ENCODE measurements at regions of chrX and their contacts with region 1.

Region 1: DNA sequence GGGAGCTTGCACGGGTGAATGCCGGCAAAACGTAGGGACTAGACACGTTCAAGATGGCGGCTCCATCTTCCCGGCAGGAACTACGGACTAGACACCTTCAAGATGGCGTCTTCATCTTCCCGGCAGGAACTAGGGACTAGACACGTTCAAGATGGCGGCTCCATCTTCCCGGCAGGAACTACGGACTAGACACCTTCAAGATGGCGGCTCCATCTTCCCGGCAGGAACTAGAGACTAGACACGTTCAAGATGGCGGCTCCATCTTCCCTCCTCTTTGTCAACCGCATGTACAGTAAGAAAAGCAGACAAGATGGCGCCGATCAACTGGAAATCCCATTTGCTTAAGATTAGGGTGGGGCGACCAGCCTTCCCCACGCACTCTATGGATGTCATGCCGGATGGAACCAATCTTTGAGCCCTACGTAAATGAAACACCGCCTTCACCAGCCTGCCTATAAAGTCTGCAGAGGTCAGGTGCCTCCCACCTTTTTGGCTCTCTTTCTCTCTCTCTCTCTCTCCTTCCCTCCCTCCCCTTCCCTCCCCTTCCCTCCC is 222.4 kb downstream of the CRLF2 start:
- DNase-seq: peak in 1 of 2 donors; percentile 81
- ATAC-seq: peak; percentile 74 to 91
- H3K4me3 ChIP-seq: peak overlapping the region in 3 of 4 donors; percentile 30 to 53 (median 35)
- H3K27ac ChIP-seq: peak overlapping the region in 3 of 4 donors; percentile 31 to 72 (median 68)
- H3K4me1 ChIP-seq: no peaks in the 10 kb centered on the region
- H3K27me3 ChIP-seq: no peaks in the 10 kb centered on the region
- CTCF ChIP-seq: no peak
- POLR2A ChIP-seq: no peak

Region 2: DNA sequence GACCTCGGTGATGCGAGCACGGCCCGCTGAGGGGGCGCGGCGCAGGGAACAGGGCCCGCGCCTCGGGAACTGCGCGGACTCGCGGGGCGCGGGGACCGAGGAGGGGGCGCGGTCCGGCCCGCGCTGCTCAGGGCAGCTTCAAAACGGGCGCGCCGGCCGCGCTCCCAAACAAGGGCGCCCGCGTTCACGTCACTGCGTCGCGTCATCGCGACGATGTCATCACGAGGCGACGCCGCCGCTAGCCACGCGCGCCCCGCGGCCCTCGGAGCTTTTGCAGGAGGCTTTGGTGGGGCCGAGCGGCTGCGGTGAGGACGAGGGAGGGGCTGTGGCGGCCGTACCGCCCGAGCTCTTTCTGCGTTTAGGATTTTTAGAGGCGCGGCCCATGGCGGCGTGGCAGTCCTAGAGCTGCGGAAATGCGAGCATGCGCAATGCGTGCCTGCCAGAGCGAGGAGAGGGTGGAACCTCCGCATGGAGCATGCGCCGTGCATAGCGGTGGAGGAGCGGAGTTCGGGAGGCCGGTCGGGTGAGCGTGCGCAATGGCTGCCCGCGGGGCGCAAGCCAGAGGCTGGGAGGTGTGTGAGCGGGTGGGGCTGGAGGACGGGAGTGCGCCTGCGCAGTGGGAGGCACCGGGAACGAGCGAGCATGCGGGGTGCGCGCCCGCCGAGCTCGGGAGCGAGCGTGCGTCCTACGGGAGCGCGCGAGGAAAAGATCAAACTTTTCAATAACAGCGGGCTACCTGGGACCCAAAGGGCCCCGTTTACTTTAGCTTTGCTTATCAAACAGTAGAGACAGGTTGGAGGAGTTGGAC is 603.1 kb before region 1 on chrX and contains the start of gene PPP2R3B:
- in situ Hi-C with region 1: no loop called
- intact Hi-C with region 1: loop called (anchors 10 kb)
- DNase-seq: peak; percentile 99
- ATAC-seq: peak; percentile 98 to 99
- H3K4me3 ChIP-seq: peak within 1 kb of the TSS; percentile 79 to 98 (median 85)
- H3K27ac ChIP-seq: peak within 1 kb of the TSS; percentile 96 to 99 (median 98)
- H3K4me1 ChIP-seq: peaks cover 7% of the 10 kb centered on the region in 2 donors
- H3K27me3 ChIP-seq: no peaks in the 10 kb centered on the region
- CTCF ChIP-seq: peak in 2 of 5 experiments; percentile 32 to 41
- POLR2A ChIP-seq: peak; percentile 46 to 55
- total RNA-seq, gene PPP2R3B: 53.8 to 103 (median 69.4) TPM

Region 3: DNA sequence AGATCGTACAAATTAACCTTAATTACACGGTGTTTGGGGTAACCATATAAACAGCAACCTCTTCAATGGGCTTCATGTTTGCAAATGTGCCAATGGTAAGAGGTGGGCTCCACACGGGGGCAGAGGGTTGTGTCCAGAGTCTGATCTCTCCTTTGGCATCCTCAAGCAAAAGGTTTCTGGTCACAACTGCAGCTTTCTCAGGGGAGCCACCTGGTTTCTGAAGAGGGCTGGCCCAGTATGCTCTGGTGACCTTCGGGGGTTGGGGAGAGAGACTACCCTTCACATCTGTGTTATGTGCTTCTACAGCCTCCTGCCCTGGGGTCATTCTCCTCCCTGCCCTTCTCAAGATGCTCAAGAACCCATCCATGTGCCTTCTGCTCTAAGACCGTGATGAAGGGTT is 37.2 kb before region 1 on chrX:
- in situ Hi-C with region 1: no loop called
- intact Hi-C with region 1: no loop called
- DNase-seq: no peak
- ATAC-seq: no peak
- H3K4me3 ChIP-seq: no peak overlapping the region
- H3K27ac ChIP-seq: no peak overlapping the region
- H3K4me1 ChIP-seq: no peaks in the 10 kb centered on the region
- H3K27me3 ChIP-seq: no peaks in the 10 kb centered on the region
- CTCF ChIP-seq: no peak
- POLR2A ChIP-seq: no peak

Region 4: GRCh38 chrX:1591102-1591900 is 601.3 kb after region 1 on chrX and contains the start of gene AKAP17A:
- in situ Hi-C with region 1: no loop called
- intact Hi-C with region 1: loop called (anchors 5 kb)
- DNase-seq: peak; percentile 91 to 95
- ATAC-seq: peak; percentile 95 to 99
- H3K4me3 ChIP-seq: peak within 1 kb of the TSS; percentile 77 to 99 (median 91)
- H3K27ac ChIP-seq: peak within 1 kb of the TSS; percentile 74 to 88 (median 80)
- H3K4me1 ChIP-seq: peaks cover 6 to 14% of the 10 kb centered on the region in 2 donors
- H3K27me3 ChIP-seq: no peaks in the 10 kb centered on the region
- CTCF ChIP-seq: peak in 1 of 5 experiments; percentile 21
- POLR2A ChIP-seq: peak; percentile 80 to 84
- total RNA-seq, gene AKAP17A: 14.1 to 15.9 (median 14.5) TPM

Region 5: DNA sequence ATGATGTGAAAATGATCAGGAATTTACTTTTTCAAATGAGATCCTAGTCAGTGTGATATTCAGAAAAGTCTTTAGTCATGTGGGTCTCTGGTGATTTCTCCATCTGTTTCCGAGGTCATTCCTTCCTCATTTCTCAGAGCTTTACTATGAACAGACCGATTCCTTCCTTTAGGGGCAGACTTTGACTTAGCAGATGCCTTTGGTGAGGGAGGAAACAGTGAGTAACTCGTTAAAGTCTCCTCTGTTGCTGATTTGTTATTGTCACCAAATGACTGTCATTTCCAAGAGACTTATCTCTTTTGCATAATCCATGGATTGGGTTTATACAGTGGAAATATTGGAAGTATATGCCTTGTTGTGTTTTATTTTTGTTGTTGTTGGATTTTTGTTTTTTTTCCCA is 1624.9 kb after region 1 on chrX:
- in situ Hi-C with region 1: no loop called
- intact Hi-C with region 1: loop called (anchors 10 kb)
- DNase-seq: no peak
- ATAC-seq: peak; percentile 27 to 42
- H3K4me3 ChIP-seq: no peak overlapping the region
- H3K27ac ChIP-seq: no peak overlapping the region
- H3K4me1 ChIP-seq: peaks cover 5 to 12% of the 10 kb centered on the region in 2 donors
- H3K27me3 ChIP-seq: no peaks in the 10 kb centered on the region
- CTCF ChIP-seq: peak in 2 of 5 experiments; percentile 3 to 11
- POLR2A ChIP-seq: no peak

Region 6: GRCh38 chrX:2627272-2627867 is 1637.3 kb after region 1 on chrX:
- in situ Hi-C with region 1: loop called in 1 of 4 experiments (anchors 25 kb)
- intact Hi-C with region 1: no loop called
- DNase-seq: peak in 1 of 2 donors; percentile 28
- ATAC-seq: peak in 1 of 2 donors; percentile 46
- H3K4me3 ChIP-seq: no peak overlapping the region
- H3K27ac ChIP-seq: no peak overlapping the region
- H3K4me1 ChIP-seq: no peaks in the 10 kb centered on the region
- H3K27me3 ChIP-seq: no peaks in the 10 kb centered on the region
- CTCF ChIP-seq: peak in 3 of 5 experiments; percentile 14 to 38 (median 38)
- POLR2A ChIP-seq: no peak

Measured in gastrocnemius medialis (tissue), 4 donors.